ENCODE measurements at regions of chr10 and their contacts with region 1.

Region 1: DNA sequence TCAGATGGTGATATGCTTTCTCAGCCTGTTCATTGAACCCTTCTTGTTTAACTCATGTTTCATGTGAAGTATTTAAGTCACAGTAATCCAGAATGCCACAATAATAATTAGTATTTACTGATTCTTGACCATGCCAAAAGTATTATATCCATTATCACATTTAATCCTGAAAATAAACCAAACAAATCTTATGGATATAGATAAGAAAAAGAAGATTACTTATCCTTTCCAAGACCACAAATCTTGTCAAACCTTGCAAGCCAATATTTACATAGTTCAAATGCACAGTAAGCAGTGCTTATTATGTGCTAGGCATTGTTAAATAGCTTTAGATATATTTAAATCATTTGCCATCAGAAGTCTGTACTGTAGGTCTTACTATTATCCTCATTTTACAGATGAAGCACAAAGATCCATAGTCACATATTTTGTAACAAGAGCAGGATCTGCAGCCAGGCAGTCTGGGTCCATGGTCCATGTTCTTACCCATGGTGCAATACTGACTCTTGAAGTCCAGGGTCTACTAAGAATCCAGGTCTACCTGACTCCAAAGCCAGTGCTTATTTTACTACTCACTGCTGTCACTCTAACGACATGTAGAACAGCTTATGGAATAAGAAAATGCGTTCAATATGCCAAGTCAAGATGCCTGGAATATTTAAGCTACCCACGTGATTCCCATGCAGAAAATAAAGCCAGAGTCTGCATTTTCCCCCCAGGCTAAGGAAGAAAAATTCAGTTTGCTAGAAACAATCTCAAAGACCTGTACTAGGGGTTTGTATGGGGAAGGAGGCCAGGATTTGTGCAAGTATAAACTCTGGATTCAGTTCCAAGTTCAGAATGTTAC is 984.8 kb upstream of the LRRTM3 start:
- DNase-seq: peak; percentile 2
- ATAC-seq: peak; percentile 63
- H3K4me3 ChIP-seq: no peak overlapping the region
- H3K27ac ChIP-seq: no peak overlapping the region
- H3K4me1 ChIP-seq: peaks cover 8% of the 10 kb centered on the region
- H3K27me3 ChIP-seq: no peaks in the 10 kb centered on the region
- CTCF ChIP-seq: no peak
- EP300 ChIP-seq: no peak
- POLR2A ChIP-seq: no peak
- RAD21 ChIP-seq: no peak

Region 2: GRCh38 chr10:65911436-65911835 is 29.6 kb before region 1 on chr10:
- CTCF ChIA-PET with region 1: no interaction called
- POLR2A ChIA-PET with region 1: no interaction called
- in situ Hi-C with region 1: no loop called
- intact Hi-C with region 1: loop called (anchors 1 kb)
- DNase-seq: no peak
- ATAC-seq: no peak
- H3K4me3 ChIP-seq: no peak overlapping the region
- H3K27ac ChIP-seq: no peak overlapping the region
- H3K4me1 ChIP-seq: no peaks in the 10 kb centered on the region
- H3K27me3 ChIP-seq: no peaks in the 10 kb centered on the region
- CTCF ChIP-seq: no peak
- EP300 ChIP-seq: no peak
- POLR2A ChIP-seq: no peak
- RAD21 ChIP-seq: no peak

Measured in HepG2 (cell line).